Mucosa of descending colon (tissue), 3 donors: ENCODE measurements at regions of chr5 and their contacts with region 1.

Region 1: GRCh38 chr5:135829681-135830383 is 4.6 kb upstream of the SLC25A48 start:
- DNase-seq: peak in 2 of 3 donors; percentile 84 to 86
- ATAC-seq: peak; percentile 55
- H3K4me3 ChIP-seq: no peak overlapping the region
- H3K4me1 ChIP-seq: peaks cover 4% of the 10 kb centered on the region
- CTCF ChIP-seq: peak; percentile 57

Region 2: DNA sequence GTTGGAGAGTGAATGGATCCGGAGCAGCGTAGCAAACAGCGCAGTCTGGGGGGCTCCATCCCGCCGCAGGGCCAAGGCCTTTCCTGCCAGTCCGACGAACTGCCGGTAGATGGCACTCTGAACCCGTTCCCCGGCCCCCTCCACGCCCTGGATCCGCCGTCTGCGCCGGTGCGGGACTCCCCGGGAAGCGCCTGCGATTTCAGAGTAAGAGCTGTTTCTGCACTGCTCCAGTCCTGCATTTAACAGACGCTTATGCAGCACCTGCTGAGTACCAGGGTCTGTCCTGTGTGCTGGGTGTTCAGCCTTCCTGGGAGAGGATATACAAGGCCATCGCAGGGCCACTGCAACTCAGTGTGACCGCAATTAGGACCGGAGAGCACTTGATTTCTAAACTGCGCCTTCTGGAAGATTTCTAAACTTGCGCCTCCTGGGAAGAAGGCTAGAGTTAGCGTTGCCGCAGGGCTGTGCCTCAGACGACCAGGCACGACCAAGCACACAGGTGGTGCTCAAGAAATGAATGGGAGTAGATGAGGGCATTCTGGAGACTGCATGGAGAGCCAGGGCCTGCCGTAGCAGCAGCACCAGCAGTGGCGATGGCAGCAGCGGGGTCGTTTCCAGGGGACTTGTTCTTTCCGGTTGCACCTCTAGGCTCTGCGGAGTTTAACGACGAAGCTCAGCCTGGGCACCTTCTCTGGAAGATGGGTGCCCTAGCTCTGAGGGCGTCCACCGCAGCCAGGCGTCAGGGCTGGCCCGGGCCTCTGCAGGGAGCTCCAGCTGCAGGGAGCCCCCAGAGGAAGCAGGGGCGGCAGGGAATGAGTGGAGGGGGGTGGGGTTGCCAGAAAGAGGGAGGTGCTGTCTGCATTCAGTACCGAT is 363.4 kb before region 1 on chr5:
- intact Hi-C with region 1: loop called in 1 of 2 experiments (anchors 10 kb)
- DNase-seq: peak; percentile 66 to 82 (median 80)
- ATAC-seq: peak; percentile 86
- H3K4me3 ChIP-seq: no peak overlapping the region
- H3K4me1 ChIP-seq: no peaks in the 10 kb centered on the region
- CTCF ChIP-seq: peak; percentile 72

Region 3: DNA sequence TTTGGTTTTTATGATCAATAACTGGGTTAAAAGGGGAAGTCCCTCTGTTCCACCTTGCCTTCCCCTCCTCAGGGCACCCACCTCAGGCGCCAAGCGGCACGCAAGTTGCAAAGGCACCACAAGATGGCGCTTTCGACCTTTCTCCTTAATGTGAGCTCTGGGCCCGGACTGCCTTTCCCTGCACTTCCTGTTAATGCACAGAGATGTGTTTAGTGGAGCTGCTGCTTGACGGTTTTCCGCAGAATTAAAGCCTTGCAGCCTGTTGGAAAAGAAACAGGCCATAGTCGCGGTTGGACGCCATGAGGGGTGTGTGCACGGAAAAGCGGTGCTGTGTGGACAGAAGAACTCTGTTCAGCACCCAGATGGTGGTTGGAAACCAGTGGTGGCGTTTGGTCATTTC is 269.0 kb before region 1 on chr5:
- intact Hi-C with region 1: loop called (anchors 2 to 5 kb)
- DNase-seq: peak in 2 of 3 donors; percentile 84 to 92
- ATAC-seq: peak; percentile 96
- H3K4me3 ChIP-seq: no peak overlapping the region
- H3K4me1 ChIP-seq: no peaks in the 10 kb centered on the region
- CTCF ChIP-seq: peak; percentile 81

Region 4: DNA sequence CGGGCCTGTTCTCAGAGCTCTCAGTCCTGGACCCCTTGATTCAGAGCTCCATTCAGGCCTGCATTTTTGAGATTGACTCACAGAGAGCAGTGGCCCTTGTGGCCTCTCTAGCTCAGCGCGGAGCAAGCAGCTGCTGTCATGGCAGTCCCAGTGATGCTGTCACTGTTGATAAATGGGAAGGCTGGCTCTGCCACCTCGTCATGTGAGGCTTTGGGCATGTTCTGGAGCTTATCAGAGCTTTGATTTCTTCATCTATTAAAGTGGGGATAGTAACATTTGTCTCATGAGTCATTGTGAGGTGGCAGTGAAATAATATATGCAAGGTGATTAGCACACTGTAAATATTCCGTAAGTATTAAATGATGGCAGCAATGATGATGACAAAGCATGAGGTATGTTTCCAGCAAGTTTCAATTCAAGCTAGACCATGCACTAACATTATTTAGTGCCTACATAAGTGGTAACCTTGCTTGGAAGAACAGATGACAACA is 124.6 kb before region 1 on chr5:
- intact Hi-C with region 1: no loop called
- DNase-seq: no peak
- ATAC-seq: peak; percentile 11
- H3K4me3 ChIP-seq: no peak overlapping the region
- H3K4me1 ChIP-seq: peaks cover 15% of the 10 kb centered on the region
- CTCF ChIP-seq: no peak

Region 5: DNA sequence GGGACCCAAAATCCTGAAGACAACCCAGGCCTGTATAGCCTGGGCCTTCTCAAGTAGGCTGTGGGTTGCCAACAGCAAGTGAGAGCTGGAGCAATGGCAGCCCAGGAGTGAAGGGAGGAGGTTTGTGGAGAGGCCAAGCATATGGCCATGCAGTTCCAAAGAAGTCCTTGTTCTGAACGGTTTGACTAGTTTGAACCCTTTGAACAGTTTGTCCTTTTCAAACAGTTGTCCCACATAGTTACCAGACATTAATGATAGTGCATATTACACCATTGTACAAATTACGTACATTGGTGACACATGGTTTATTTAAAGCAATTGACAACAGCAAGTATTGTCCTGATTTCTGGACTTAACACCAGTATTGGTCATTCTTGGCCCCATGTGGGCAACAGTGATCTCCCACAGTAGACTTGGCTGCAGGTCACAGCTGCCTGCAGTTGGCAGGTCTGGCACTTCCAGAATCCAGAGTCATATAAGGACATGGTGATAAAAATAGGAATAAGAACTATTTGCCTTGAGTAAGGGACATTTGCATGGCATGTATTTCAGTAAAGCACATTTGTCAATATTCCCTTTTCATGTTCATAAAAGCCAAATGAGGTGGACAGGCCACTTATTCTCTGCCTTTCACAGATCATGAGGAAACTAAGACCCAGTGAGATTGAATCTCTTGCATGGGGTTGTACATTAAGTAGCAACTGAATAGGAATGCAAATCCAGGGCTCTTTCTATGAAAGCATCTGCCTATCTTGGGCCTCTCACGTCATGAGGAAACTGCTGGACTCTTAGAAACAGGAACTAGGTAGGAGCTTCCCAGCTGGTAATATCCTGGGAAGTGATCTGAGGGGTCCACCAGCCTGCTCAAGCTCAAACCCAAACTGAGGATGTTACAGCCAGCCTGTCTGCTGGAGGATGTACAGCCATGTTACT is 34.9 kb after region 1 on chr5:
- intact Hi-C with region 1: no loop called
- DNase-seq: no peak
- ATAC-seq: no peak
- H3K4me3 ChIP-seq: no peak overlapping the region
- H3K4me1 ChIP-seq: peaks cover 14% of the 10 kb centered on the region
- CTCF ChIP-seq: no peak

Region 6: DNA sequence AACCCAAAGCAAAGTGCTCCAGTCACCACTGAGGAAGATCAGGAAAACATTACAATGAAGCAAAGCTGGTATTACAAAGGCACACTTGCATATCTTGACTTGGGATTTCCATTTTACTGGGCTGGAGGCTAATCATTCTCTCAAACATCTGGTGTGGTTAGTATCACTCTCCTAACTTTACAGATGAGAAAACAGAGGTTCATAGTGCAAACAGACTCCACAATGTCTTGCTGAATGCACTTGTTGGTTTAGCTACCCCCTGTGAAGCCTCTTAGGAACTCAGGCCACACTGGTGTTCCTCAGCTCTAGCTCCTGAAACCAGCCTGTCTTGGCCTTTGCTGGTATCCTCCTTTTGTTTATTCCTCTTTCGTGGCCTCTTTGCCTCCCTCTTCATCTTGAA is 273.3 kb after region 1 on chr5:
- intact Hi-C with region 1: no loop called
- DNase-seq: no peak
- ATAC-seq: no peak
- H3K4me3 ChIP-seq: no peak overlapping the region
- H3K4me1 ChIP-seq: no peaks in the 10 kb centered on the region
- CTCF ChIP-seq: no peak